Upper lobe of right lung (tissue), 1 donor: ENCODE measurements at regions of chr20 and their contacts with region 1.

Region 1: GRCh38 chr20:48904365-48905296 is 16.9 kb upstream of the ARFGEF2 start:
- DNase-seq: no peak
- ATAC-seq: peak; percentile 69
- H3K4me3 ChIP-seq: no peak overlapping the region
- H3K27ac ChIP-seq: no peak overlapping the region
- H3K4me1 ChIP-seq: peaks cover 3% of the 10 kb centered on the region
- H3K27me3 ChIP-seq: no peaks in the 10 kb centered on the region
- CTCF ChIP-seq: peak; percentile 86

Region 2: DNA sequence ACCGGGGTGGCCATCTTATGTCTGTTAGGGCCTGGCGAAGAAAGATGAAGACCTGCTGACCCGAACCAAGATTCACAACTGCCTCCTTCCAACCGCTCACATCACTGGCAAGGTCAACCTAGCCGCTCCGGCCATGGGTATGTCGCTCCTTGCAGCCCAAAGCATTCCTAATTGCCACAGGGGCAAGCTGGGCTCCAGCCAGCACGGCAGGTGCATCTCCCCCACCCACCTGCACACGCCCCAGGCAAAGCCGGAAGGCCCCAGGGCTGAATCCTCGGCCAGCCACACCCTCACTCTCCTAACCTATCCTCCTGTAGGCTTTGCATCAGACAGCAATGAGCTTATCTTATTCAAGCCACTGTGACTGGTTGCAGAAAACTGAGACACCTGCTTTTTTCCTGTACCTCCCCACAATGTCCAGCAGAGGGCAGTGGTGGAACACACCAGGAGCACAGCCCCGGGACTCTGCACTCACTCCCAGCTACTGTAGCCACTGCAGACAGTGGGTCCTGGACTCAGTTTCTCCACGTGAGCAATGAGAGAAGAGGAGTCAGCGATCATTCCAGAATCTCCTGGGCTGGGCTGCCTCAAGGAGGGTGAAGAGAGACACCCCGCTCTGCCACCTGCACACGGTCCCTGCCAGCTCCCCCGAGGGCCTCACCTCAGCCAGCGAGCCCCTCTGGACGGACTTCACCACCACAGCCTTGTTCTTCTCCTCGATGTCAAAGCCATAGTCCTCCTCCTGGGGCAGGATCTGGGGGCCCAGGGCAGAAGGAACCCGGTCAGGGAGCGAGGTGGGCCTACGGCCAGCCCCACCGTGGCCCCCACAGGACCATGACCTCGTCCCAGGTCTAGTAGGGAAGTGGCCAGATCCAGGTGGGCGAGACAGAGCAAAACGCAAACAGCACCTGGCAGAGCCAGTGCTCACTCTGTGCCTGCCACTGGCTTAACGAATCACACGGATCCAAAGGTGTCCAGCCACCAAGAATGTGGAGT is 246.9 kb before region 1 on chr20:
- intact Hi-C with region 1: loop called (anchors 5 kb)
- DNase-seq: peak; percentile 71
- ATAC-seq: peak; percentile 91
- H3K4me3 ChIP-seq: no peak overlapping the region
- H3K27ac ChIP-seq: no peak overlapping the region
- H3K4me1 ChIP-seq: no peaks in the 10 kb centered on the region
- H3K27me3 ChIP-seq: no peaks in the 10 kb centered on the region
- CTCF ChIP-seq: peak; percentile 93